ENCODE measurements at regions of chr18 and their contacts with region 1.

Region 1: GRCh38 chr18:12391618-12392165 is 14.7 kb upstream of the AFG3L2 start:
- DNase-seq: peak in 1 of 3 donors; percentile 55
- ATAC-seq: peak; percentile 90 to 95 (median 92)
- H3K4me3 ChIP-seq: no peak overlapping the region
- H3K27ac ChIP-seq: no peak overlapping the region
- H3K4me1 ChIP-seq: peaks cover 0 to 6% (median 0%) of the 10 kb centered on the region in 4 donors
- H3K27me3 ChIP-seq: no peaks in the 10 kb centered on the region
- CTCF ChIP-seq: peak; percentile 73 to 82 (median 75)
- POLR2A ChIP-seq: no peak

Region 2: GRCh38 chr18:12659904-12660605 is 268.4 kb after region 1 on chr18:
- intact Hi-C with region 1: loop called in 1 of 2 experiments (anchors 10 kb)
- DNase-seq: no peak
- ATAC-seq: peak; percentile 55 to 72 (median 65)
- H3K4me3 ChIP-seq: no peak overlapping the region
- H3K27ac ChIP-seq: no peak overlapping the region
- H3K4me1 ChIP-seq: peaks cover 0 to 5% (median 0%) of the 10 kb centered on the region in 4 donors
- H3K27me3 ChIP-seq: peaks cover 0 to 11% of the 10 kb centered on the region in 2 donors
- CTCF ChIP-seq: peak; percentile 86 to 94 (median 86)
- POLR2A ChIP-seq: no peak

Measured in right lobe of liver (tissue), 6 donors.